Heart left ventricle (tissue), 16 donors: ENCODE measurements at regions of chr6 and their contacts with region 1.

Region 1: DNA sequence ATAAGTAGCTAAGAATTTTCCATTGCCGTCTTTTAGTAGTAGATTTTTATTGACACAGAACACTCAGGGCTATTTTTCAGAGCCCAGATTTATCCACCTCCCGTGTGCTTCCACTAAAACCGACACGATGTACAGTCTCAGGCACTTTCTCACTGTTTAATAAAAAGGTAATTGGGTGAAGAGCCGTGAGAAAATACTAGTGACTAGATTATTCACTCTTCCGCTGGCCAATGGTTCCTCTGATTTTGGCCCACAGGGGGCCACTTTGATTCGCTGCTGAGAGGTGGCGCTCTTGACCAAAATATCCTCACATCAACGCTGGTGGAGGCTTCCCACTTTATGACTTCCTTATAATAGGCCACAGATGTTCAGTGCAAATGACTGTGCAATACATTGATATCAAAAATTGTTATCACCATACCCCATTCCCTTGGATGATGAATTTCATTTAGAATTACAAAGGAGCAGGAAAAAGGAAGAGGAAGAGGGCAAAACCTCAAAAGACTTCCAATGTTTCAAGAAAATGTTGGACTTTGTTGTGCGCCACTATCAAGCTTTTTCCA is 12.3 kb upstream of the HDDC2 start:
- DNase-seq: peak; percentile 63 to 77 (median 69)
- ATAC-seq: peak; percentile 83 to 95 (median 91)
- H3K4me3 ChIP-seq: no peak overlapping the region
- H3K27ac ChIP-seq: peak overlapping the region in 2 of 12 donors; percentile 24 to 25
- H3K4me1 ChIP-seq: peaks cover 0 to 6% (median 1%) of the 10 kb centered on the region in 12 donors
- H3K27me3 ChIP-seq: peaks cover 0 to 3% (median 0%) of the 10 kb centered on the region in 9 donors
- CTCF ChIP-seq: peak; percentile 72 to 97 (median 88)
- POLR2A ChIP-seq: no peak

Region 2: GRCh38 chr6:125213939-125214338 is 100.2 kb before region 1 on chr6:
- intact Hi-C with region 1: no loop called
- DNase-seq: no peak
- ATAC-seq: peak in 1 of 4 donors; percentile 19
- H3K4me3 ChIP-seq: no peak overlapping the region
- H3K27ac ChIP-seq: no peak overlapping the region
- H3K4me1 ChIP-seq: peaks cover 0 to 24% (median under 1%) of the 10 kb centered on the region in 12 donors
- H3K27me3 ChIP-seq: no peaks in the 10 kb centered on the region
- CTCF ChIP-seq: no peak
- POLR2A ChIP-seq: no peak

Region 3: DNA sequence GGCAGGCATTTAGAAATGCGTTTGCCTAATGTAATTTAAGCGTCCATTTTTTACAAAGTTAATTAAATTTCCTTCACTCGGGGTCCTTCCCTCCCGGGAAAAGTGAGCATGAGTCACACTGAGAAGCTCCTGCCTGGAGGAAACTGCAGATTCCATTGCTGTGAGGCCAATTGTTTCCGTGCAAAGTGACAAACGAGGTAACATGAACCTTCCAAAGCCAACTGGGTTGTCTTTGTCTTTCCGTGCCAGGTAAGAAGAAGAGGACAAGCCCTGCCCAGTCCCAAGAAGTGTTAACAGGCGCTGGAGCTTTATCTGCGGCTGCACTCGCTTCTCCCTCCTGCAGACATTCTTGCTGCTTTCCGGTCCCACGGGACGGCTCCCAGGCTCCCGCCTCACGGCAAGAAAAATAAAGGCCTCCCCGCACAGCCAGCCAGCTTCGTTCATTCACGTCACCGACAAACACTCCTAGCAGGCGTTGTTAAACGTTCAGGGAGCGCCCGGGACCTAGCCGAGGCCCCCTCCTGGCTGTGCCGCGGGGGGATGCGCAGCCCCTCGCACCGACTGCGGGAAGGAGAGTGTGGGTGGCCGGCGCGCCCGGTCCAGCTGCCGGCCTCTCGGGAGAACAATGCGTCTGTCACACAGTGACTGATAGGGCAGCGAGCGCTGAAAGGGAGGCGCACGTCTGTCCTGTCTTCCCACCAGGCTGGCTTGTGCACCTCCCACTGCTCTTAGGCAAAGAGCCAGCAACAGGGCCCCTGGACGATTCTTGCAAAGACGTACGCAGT is 49.1 kb after region 1 on chr6:
- intact Hi-C with region 1: loop called in 1 of 10 experiments (anchors 5 kb)
- DNase-seq: peak; percentile 82 to 90 (median 88)
- ATAC-seq: peak; percentile 83 to 89 (median 86)
- H3K4me3 ChIP-seq: peak overlapping the region; percentile 26 to 62 (median 54)
- H3K27ac ChIP-seq: peak overlapping the region; percentile 39 to 94 (median 86)
- H3K4me1 ChIP-seq: peaks cover 0 to 36% (median 16%) of the 10 kb centered on the region in 12 donors
- H3K27me3 ChIP-seq: peaks cover 0 to 26% (median 0%) of the 10 kb centered on the region in 9 donors
- CTCF ChIP-seq: no peak
- POLR2A ChIP-seq: no peak

Region 4: DNA sequence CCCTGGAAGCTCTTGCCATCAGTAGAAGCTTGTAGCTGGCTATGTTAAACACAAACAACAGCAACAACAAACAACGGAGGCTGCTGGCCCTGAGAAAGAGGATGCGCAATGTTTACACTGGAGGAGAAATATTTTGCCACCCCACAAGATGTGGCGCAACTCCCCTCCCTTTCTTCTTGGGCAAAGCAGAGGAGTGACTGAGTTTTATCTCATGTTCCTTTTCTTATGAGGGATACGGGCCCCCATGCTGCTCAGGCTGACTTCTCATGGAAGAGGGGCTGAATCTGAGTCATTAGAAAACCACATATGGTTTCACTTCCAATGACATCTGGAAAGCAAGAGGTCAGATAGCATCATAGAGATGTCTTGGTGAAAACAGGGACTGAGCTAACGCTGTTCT is 63.5 kb after region 1 on chr6:
- intact Hi-C with region 1: no loop called
- DNase-seq: no peak
- ATAC-seq: peak in 1 of 4 donors; percentile 59
- H3K4me3 ChIP-seq: no peak overlapping the region
- H3K27ac ChIP-seq: peak overlapping the region in 2 of 12 donors; percentile 10 to 45
- H3K4me1 ChIP-seq: no peaks in the 10 kb centered on the region
- H3K27me3 ChIP-seq: no peaks in the 10 kb centered on the region
- CTCF ChIP-seq: no peak
- POLR2A ChIP-seq: no peak

Region 5: GRCh38 chr6:125749173-125749864 is 435.2 kb after region 1 on chr6 and contains the start of gene HEY2:
- intact Hi-C with region 1: loop called in 6 of 10 experiments (anchors 1 to 5 kb)
- DNase-seq: peak; percentile 96 to 97 (median 97)
- ATAC-seq: peak; percentile 82 to 97 (median 91)
- H3K4me3 ChIP-seq: peak within 1 kb of the TSS; percentile 56 to 89 (median 79)
- H3K27ac ChIP-seq: peak within 1 kb of the TSS; percentile 89 to 99 (median 94)
- H3K4me1 ChIP-seq: peaks cover 0 to 52% (median 2%) of the 10 kb centered on the region in 12 donors
- H3K27me3 ChIP-seq: peaks cover 0 to 81% (median 0%) of the 10 kb centered on the region in 9 donors
- CTCF ChIP-seq: peak in 2 of 12 donors; percentile 11 to 18
- POLR2A ChIP-seq: peak; percentile 84 to 97
- total RNA-seq, gene HEY2: 29.2 to 50.9 (median 40.6) TPM

Region 6: DNA sequence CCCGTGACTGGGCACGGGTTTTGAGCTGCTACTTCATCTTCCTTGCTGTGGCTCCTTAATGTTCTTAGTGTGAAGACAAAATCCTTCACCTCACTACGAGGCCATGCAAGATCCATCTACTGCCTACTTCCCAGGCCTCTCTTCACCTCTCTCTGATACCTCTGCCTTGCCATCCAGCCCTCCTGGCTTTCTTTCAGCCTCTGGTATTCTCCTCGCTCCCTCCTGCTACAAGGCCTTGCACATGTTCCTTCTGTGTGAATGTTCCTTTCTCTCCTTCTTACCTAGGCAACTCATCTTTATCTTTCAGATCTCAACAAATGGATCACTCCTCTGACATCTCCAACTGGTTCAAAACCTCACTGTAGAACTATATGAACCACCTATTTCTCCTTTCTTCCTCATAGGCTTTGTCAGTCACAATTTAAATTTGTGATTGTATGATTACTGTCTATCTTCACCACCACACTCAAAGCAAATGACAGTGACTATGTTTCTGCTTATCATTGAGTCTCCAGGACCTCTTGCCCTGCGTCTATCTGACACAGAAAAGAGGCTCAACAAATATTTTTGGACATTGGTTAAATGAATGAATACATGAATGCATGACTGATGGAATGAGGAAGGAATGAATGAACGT is 455.2 kb after region 1 on chr6:
- intact Hi-C with region 1: loop called (anchors 1 to 5 kb)
- DNase-seq: no peak
- ATAC-seq: no peak
- H3K4me3 ChIP-seq: no peak overlapping the region
- H3K27ac ChIP-seq: no peak overlapping the region
- H3K4me1 ChIP-seq: peaks cover 0 to 18% (median 0%) of the 10 kb centered on the region in 12 donors
- H3K27me3 ChIP-seq: peaks cover 0 to 7% (median 0%) of the 10 kb centered on the region in 9 donors
- CTCF ChIP-seq: no peak
- POLR2A ChIP-seq: no peak

Region 7: DNA sequence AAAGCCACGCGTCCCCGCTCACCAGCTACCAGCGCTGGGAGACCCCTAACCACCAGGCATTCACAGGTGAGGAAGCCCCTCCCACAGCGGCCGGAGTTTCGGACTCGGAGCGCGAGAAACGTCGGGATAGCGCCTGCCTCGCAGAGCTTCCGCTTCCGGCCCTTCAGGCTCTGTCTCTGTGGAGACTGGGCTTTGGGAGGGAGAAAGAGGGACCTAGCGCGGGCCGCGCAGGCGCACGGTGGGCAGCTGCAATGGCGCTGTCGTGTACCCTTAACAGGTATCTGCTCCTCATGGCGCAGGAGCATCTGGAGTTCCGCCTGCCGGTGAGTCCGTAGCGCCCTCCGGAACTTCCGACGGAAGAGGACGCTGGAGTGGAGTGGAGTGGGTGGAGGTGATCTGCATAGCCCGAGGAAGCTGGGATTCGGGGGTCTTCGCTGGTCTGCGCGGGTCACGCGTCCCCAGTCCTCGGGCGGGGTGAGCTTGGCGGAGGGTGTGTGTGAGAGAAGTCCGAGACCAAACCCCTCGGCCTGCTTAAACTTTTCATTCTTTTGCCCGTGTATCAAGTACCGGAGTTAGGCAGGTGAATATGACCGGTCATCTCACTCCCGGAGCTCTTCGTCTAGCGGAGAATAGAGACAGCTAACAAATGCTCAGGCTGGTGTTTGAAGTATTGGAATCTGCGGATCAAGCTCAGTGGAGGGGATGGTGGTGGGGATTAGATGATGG is 672.4 kb after region 1 on chr6 and contains the start of gene TRMT11:
- intact Hi-C with region 1: loop called in 2 of 10 experiments (anchors 10 kb)
- DNase-seq: peak; percentile 85 to 92 (median 91)
- ATAC-seq: peak; percentile 99
- H3K4me3 ChIP-seq: peak within 1 kb of the TSS; percentile 63 to 91 (median 80)
- H3K27ac ChIP-seq: peak within 1 kb of the TSS in 11 of 12 donors; percentile 58 to 86 (median 75)
- H3K4me1 ChIP-seq: peaks cover 0 to 21% (median 9%) of the 10 kb centered on the region in 12 donors
- H3K27me3 ChIP-seq: no peaks in the 10 kb centered on the region
- CTCF ChIP-seq: peak in 3 of 12 donors; percentile 17 to 21 (median 18)
- POLR2A ChIP-seq: peak in 1 of 2 donors; percentile 61
- total RNA-seq, gene TRMT11: 9.0 to 15.6 (median 11.8) TPM